ENCODE measurements at regions of chr7 and their contacts with region 1.

Region 1: GRCh38 chr7:876167-876967 is at the start of gene GET4:
- DNase-seq: peak; percentile 93
- ATAC-seq: peak; percentile 94
- H3K4me3 ChIP-seq: peak within 1 kb of the TSS; percentile 93
- H3K27ac ChIP-seq: peak within 1 kb of the TSS; percentile 84
- H3K4me1 ChIP-seq: peaks cover 5% of the 10 kb centered on the region
- H3K27me3 ChIP-seq: no peaks in the 10 kb centered on the region
- CTCF ChIP-seq: 0 out of 2 replicates have a peak, but pooled peaks have one; percentile 3
- POLR2A ChIP-seq: peak; percentile 77
- RAD21 ChIP-seq: no peak
- total RNA-seq, gene GET4: 10.6 and 11.3 TPM in 2 replicates

Region 2: DNA sequence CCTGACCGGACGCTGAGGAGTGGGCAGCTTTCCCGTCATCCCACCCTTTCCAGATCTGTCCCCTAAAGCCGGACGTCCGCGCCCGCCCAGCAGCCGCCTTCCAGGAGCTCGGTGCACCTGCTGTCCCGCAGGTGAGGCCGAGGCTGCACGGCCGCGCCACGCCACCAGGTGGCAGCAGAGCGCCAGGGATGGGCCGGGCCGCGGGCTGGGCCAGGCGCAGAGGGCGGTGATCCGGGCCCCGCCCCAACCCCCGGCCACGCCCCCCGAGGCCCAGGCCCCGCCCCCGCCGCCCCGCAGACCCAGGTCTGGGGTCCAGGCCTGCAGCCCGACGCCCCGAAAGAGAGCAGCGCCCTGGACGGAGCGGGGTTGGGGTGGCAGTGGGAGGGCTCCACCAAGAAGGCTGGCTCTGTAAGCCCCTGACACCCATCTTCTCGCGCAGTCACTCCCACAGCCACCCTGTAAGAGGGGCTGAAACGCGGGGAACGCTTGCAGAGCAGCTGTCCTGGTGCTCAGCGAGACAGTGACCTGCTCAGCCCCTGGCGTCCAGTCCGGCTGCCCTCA is 554.2 kb before region 1 on chr7:
- CTCF ChIA-PET with region 1: no interaction called
- POLR2A ChIA-PET with region 1: no interaction called
- dilution Hi-C with region 1: no loop called
- in situ Hi-C with region 1: no loop called
- intact Hi-C with region 1: loop called (anchors 2 kb)
- DNase-seq: peak; percentile 3
- ATAC-seq: peak; percentile 99
- H3K4me3 ChIP-seq: no peak overlapping the region
- H3K27ac ChIP-seq: no peak overlapping the region
- H3K4me1 ChIP-seq: no peaks in the 10 kb centered on the region
- H3K27me3 ChIP-seq: peaks cover 49% of the 10 kb centered on the region
- CTCF ChIP-seq: peak; percentile 77
- POLR2A ChIP-seq: 0 out of 2 replicates have a peak, but pooled peaks have one; percentile 25
- RAD21 ChIP-seq: peak; percentile 91

Region 3: GRCh38 chr7:332646-333392 is 543.5 kb before region 1 on chr7:
- CTCF ChIA-PET with region 1: no interaction called
- POLR2A ChIA-PET with region 1: no interaction called
- dilution Hi-C with region 1: no loop called
- in situ Hi-C with region 1: no loop called
- intact Hi-C with region 1: no loop called
- DNase-seq: peak; percentile 36
- ATAC-seq: peak; percentile 96
- H3K4me3 ChIP-seq: no peak overlapping the region; the same call in 1 of the 2 replicates
- H3K27ac ChIP-seq: no peak overlapping the region
- H3K4me1 ChIP-seq: peaks cover 2% of the 10 kb centered on the region
- H3K27me3 ChIP-seq: peaks cover 28% of the 10 kb centered on the region
- CTCF ChIP-seq: peak; percentile 74
- POLR2A ChIP-seq: no peak
- RAD21 ChIP-seq: peak; percentile 80

Region 4: GRCh38 chr7:537911-538634 is 338.3 kb before region 1 on chr7:
- CTCF ChIA-PET with region 1: no interaction called
- POLR2A ChIA-PET with region 1: no interaction called
- dilution Hi-C with region 1: no loop called
- in situ Hi-C with region 1: loop called (anchors 10 kb)
- intact Hi-C with region 1: no loop called
- DNase-seq: peak; percentile 89
- ATAC-seq: peak; percentile 87
- H3K4me3 ChIP-seq: no peak overlapping the region
- H3K27ac ChIP-seq: peak overlapping the region; percentile 77
- H3K4me1 ChIP-seq: peaks cover 31% of the 10 kb centered on the region
- H3K27me3 ChIP-seq: peaks cover 6% of the 10 kb centered on the region; the same call in 1 of the 2 replicates
- CTCF ChIP-seq: no peak
- POLR2A ChIP-seq: no peak
- RAD21 ChIP-seq: peak; percentile 26; the same call in 1 of the 2 replicates

Region 5: DNA sequence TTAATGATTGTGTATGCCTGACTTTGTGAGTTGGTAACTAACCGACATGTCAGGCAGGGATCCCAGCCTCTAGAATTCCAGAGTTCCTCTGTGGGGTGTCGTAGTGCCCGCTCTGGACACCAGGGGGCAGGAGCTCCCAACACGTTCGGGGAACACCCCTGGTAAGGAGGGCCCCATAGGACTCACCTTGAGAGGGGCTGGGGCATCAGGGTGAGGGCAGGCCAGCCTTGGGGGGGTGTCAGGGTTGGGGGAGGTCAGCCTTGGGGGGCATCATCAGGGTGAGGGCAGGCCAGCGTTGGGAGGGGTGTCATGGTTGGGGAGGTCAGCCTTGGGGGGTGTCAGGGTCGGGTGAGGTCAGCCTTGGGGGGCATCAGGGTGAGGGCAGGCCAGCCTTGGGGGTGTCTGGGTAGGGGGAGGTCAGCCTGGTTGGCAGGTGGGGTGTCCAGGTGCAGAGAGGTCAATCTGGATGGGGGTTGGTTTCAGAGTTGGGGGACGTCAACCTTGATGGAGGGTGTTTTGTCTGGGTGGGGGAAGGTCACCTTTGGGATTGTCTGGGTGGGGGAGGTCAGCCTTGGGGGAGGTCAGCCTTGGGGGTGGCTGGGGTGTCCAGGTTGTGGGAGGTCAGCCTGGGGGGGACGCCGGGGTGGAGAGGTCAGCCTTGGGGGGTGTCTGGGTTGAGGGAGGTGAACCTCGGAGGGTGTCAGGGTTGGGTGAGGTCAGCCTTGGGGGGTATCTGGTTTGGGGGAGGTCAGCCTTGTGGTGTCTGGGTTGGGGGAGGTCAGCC is 89.7 kb before region 1 on chr7:
- CTCF ChIA-PET with region 1: interaction called, 4 read pairs
- POLR2A ChIA-PET with region 1: no interaction called
- dilution Hi-C with region 1: no loop called
- in situ Hi-C with region 1: loop called (anchors 5 kb)
- intact Hi-C with region 1: loop called (anchors 1 kb)
- DNase-seq: peak; percentile 51
- ATAC-seq: peak; percentile 100
- H3K4me3 ChIP-seq: no peak overlapping the region
- H3K27ac ChIP-seq: peak overlapping the region; percentile 16; the same call in 1 of the 2 replicates
- H3K4me1 ChIP-seq: no peaks in the 10 kb centered on the region
- H3K27me3 ChIP-seq: no peaks in the 10 kb centered on the region
- CTCF ChIP-seq: peak; percentile 86
- POLR2A ChIP-seq: no peak
- RAD21 ChIP-seq: peak; percentile 85

Region 6: DNA sequence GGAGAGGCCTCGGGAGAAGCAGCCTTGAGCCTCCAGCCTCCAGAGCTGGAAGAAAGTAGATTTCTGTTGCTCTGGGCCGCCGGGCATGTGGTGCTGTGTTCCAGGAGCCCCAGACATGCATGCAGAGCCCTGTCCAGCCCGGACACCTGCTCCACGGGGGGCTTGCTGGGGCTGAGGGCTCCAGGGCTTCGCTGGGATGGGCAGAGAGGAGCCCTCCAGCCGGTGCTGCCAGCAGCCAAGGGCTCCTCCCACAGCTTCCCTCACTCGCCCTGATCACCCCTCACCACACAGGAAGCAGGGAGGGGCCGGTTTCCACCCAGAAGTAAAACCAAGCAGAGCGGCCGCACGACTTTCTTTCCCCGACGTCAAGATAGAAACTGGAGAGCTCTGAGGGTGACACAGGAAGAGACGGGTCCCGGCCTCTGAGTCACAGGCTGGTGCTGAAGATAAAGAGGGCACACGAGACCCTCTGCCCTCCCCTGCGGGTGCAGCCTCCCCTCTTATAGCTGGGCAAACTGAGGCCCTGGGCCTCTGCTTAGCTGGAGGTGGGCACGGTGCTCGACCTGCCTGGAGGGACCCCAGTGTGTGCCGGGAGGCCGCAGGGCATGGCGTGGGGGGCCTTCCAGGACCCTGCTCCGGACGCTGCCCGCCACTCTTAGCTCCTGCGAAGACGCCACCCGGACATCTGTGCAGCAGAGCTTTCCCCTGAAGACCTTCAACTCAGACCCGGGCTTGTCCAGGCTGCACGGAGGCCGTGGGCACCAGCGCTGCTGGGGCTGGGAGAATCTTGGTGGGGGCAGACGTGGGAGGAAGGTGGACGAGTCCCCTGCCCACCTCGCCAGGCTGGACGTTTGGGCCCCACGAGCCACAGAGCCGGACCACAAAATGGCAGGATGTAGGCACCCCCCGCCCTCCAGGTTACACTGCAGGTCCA is 47.0 kb after region 1 on chr7:
- CTCF ChIA-PET with region 1: no interaction called
- POLR2A ChIA-PET with region 1: no interaction called
- dilution Hi-C with region 1: no loop called
- in situ Hi-C with region 1: no loop called
- intact Hi-C with region 1: no loop called
- DNase-seq: peak; percentile 47
- ATAC-seq: peak; percentile 60
- H3K4me3 ChIP-seq: no peak overlapping the region
- H3K27ac ChIP-seq: no peak overlapping the region; the same call in 1 of the 2 replicates
- H3K4me1 ChIP-seq: peaks cover 8% of the 10 kb centered on the region
- H3K27me3 ChIP-seq: no peaks in the 10 kb centered on the region
- CTCF ChIP-seq: no peak
- POLR2A ChIP-seq: no peak
- RAD21 ChIP-seq: no peak

Region 7: DNA sequence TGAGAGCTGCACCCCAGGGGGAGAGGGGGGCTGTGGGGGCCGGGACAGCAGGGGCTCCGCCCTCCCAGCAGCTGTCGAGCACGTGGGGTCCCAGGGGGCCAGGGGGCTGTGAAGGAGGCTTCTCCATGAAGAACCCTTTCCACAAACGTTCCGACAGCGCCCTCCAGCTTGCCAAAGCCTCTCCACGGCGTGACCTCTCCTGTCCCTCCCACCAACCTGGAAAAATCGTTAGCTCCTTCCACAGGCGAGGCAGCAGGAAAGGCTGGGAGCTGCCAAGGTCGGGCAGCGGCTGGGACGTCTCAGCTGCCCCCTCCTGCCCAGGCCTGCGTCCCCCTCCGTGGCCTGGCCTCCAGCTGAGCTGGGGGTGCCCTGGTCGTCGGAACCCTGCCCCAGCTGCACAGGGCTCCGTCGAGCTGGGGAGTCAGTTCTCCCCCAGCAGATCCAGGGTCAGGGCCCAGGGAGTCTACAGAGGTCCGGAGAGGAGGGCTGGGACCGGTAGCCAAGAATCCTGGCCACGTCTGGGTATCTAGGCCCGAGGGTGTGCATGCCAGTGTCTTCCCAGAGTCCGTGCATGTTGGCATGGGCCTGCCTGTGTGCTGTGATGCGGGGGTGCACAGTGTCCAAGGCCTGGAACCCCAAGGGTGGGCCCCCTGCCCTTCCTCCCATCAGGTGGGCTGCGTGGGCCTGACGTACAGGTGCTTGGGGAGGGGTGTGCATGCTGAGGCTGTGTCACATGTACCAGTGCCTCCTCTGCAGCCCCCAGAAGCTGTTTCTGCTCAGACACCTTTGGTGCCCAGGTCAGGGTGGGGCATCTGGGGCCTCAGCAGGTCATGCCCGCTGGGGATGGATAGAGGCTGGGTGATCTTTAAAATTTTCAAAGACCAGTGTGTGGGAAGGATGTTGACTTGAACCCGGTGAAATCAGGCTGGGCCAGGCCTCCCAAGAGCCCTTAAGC is 422.8 kb after region 1 on chr7:
- CTCF ChIA-PET with region 1: no interaction called
- POLR2A ChIA-PET with region 1: no interaction called
- dilution Hi-C with region 1: no loop called
- in situ Hi-C with region 1: no loop called
- intact Hi-C with region 1: no loop called
- DNase-seq: no peak
- ATAC-seq: no peak
- H3K4me3 ChIP-seq: no peak overlapping the region
- H3K27ac ChIP-seq: no peak overlapping the region
- H3K4me1 ChIP-seq: no peaks in the 10 kb centered on the region
- H3K27me3 ChIP-seq: peaks cover 58% of the 10 kb centered on the region
- CTCF ChIP-seq: no peak
- POLR2A ChIP-seq: no peak
- RAD21 ChIP-seq: no peak